HepG2 (cell line): ENCODE measurements at regions of chr11 and their contacts with region 1.

Region 1: GRCh38 chr11:9314291-9315036 is at the start of gene TMEM41B:
- DNase-seq: peak; percentile 99
- ATAC-seq: peak; percentile 97
- H3K4me3 ChIP-seq: peak within 1 kb of the TSS; percentile 93 to 99 (median 95)
- H3K27ac ChIP-seq: peak within 1 kb of the TSS; percentile 98
- H3K4me1 ChIP-seq: peaks cover 51% of the 10 kb centered on the region
- H3K27me3 ChIP-seq: no peaks in the 10 kb centered on the region; a peak in 2 of 5 replicates
- CTCF ChIP-seq: peak; percentile 29; the same call in 1 of the 2 replicates
- EP300 ChIP-seq: no peak; a peak in 1 of 4 replicates
- POLR2A ChIP-seq: peak; percentile 82 to 90
- RAD21 ChIP-seq: peak; percentile 13; the same call in 1 of the 2 replicates
- total RNA-seq, gene TMEM41B: 18.8 and 36.8 TPM in 2 replicates

Region 2: DNA sequence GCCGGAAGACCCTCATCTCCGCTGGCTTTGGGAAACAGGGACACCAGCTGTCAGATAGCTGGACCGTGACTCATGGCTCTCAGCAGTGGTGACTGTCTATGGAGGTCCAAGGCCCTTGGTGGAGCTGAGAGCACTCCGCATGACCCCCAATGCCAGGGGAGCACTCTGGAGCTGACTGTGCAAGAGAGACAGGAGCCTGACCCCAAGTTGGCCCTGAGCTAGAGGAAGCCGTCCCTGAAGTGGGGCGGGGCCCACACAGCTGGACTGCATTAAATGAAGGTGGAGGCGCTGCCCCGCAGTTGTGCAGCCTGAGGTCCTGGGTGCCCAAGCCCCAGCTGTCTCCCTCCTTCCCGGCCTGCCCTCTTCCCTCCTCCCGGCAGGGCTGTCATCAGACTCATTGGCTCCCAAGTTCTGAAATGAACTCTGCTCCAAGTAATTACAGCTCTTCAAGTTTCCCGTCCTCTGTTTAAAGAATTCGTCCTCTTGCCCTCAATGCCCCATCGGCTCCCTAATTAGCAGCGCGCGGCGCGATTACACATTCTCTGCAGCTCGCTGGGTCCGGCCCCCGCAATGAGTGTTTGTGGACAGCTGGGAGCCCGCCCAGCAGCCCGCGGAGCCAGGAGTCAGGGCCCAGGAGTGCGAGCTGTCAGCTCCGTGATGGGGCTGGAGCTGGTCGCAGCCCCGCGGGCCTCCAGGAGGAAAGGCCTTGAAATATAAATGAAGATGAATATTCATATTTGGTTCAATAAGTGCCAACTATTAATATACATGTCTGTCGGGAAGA is 957.6 kb before region 1 on chr11:
- CTCF ChIA-PET with region 1: no interaction called
- POLR2A ChIA-PET with region 1: no interaction called
- in situ Hi-C with region 1: no loop called
- intact Hi-C with region 1: no loop called
- DNase-seq: no peak
- ATAC-seq: peak; percentile 64
- H3K4me3 ChIP-seq: no peak overlapping the region
- H3K27ac ChIP-seq: no peak overlapping the region
- H3K4me1 ChIP-seq: peaks cover 11% of the 10 kb centered on the region; the same call in 1 of the 2 replicates
- H3K27me3 ChIP-seq: peaks cover 2 to 44% of the 10 kb centered on the region in 2 experiments
- CTCF ChIP-seq: no peak
- EP300 ChIP-seq: no peak
- POLR2A ChIP-seq: no peak
- RAD21 ChIP-seq: no peak

Region 3: GRCh38 chr11:9265211-9266131 is 49.0 kb before region 1 on chr11 and contains the start of gene DENND5A:
- CTCF ChIA-PET with region 1: no interaction called
- POLR2A ChIA-PET with region 1: interaction called, 11 read pairs
- in situ Hi-C with region 1: no loop called
- intact Hi-C with region 1: loop called (anchors 5 kb)
- DNase-seq: peak; percentile 80
- ATAC-seq: peak; percentile 78
- H3K4me3 ChIP-seq: peak within 1 kb of the TSS; percentile 87 to 96 (median 94)
- H3K27ac ChIP-seq: peak within 1 kb of the TSS; percentile 87
- H3K4me1 ChIP-seq: peaks cover 55% of the 10 kb centered on the region
- H3K27me3 ChIP-seq: no peaks in the 10 kb centered on the region; a peak in 1 of 5 replicates
- CTCF ChIP-seq: peak; percentile 45; the same call in 1 of the 2 replicates
- EP300 ChIP-seq: no peak
- POLR2A ChIP-seq: peak; percentile 65 to 75
- RAD21 ChIP-seq: no peak
- total RNA-seq, gene DENND5A: 57.7 and 63.3 TPM in 2 replicates

Region 4: GRCh38 chr11:9363954-9364912 is 49.8 kb after region 1 on chr11:
- CTCF ChIA-PET with region 1: no interaction called
- POLR2A ChIA-PET with region 1: interaction called, 8 read pairs
- in situ Hi-C with region 1: no loop called
- intact Hi-C with region 1: loop called (anchors 5 kb)
- DNase-seq: peak; percentile 94
- ATAC-seq: peak; percentile 96
- H3K4me3 ChIP-seq: peak overlapping the region; percentile 64 to 76 (median 68)
- H3K27ac ChIP-seq: peak overlapping the region; percentile 99
- H3K4me1 ChIP-seq: peaks cover 34% of the 10 kb centered on the region
- H3K27me3 ChIP-seq: no peaks in the 10 kb centered on the region
- CTCF ChIP-seq: peak; percentile 39
- EP300 ChIP-seq: peak; percentile 65 to 68
- POLR2A ChIP-seq: peak; percentile 74 to 78
- RAD21 ChIP-seq: peak; percentile 44; the same call in 1 of the 2 replicates